ENCODE measurements at regions of chr12 and their contacts with region 1.

Region 1: DNA sequence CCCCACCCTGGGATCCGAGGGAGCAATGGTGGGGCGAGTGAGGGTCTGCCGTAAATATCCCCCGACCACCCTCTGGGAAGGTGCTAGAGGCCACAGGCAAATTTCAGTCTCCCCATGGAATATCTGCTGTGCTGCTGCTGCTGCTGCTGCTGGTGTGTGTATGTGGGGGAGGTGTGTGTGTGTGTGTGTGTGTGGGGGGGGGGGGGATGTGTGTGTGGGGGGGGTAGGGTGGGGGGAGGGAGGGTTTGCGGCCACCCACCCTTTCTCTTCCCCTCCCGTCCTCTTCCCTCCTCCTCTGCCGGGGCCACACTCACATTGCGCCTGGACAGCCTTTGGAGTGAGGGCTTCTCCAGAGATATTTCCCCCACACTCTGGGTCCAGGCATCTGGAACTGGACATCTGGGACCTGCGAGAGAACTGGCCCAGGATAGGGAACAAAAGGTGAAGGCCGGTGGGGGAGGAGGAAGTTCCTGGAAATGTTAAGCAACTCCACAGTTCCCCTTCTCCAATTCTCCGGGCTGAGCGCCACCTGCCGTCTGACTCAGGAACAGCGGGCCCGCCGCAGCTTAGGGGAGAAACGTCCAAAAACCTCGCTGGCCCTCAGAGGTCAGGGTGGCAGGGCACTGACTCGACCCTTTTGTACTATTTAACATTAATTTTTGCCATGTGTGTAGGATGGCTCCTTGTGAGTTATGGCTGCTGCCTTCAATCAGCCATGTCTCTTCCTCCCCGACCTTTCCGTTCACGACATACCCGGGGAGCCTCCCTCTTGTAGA is at the start of gene C1RL:
- DNase-seq: peak; percentile 50 to 88 (median 65)
- ATAC-seq: peak; percentile 69
- H3K4me3 ChIP-seq: peak within 1 kb of the TSS; percentile 95
- H3K4me3 Mint-ChIP-seq: peak within 1 kb of the TSS; percentile 90 to 98 (median 94)
- H3K27ac ChIP-seq: peak within 1 kb of the TSS; percentile 79
- H3K27ac Mint-ChIP-seq: peak within 1 kb of the TSS; percentile 84 to 95 (median 93)
- H3K4me1 ChIP-seq: peaks cover 6% of the 10 kb centered on the region in 2 donors
- H3K4me1 Mint-ChIP-seq: peaks cover 29 to 64% (median 43%) of the 10 kb centered on the region in 7 donors
- H3K27me3 ChIP-seq: no peaks in the 10 kb centered on the region
- H3K27me3 Mint-ChIP-seq: no peaks in the 10 kb centered on the region
- total RNA-seq, gene C1RL: 18.5 to 38.6 (median 24.4) TPM

Region 2: DNA sequence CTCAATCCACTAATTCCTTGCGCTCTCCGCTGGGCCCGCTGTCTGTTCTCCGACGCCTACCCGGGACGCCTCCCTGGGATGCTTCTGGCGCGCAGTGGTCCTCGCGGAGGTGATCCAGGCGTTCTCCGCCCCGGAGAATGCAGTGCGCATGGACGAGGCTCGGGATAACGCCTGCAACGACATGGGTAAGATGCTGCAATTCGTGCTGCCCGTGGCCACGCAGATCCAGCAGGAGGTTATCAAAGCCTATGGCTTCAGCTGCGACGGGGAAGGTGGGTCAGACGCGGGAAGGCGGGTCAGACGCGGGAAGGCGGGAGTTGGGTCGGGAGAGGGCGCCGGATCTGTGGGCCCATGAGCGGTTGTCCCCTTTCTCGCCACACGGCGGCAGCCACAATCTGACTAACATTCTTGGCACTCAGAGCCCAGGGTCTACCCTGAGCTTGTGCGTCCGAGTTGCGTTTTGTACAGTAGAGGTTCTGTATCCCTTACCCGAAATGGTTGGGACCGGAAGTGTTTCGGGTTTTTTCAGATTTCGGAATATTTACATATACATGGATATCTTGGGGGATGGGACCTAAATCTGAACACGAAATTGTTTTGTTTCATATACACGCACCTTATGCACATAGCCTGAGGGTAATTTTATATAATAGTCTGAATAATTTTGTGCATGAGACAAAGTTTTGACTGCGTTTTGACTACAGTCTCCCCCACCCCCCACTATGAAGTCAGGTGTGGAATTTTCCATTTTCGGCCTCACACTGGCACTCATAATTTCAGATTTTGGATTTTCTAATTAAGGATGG is 164.4 kb before region 1 on chr12:
- CTCF ChIA-PET with region 1: interaction called, 50 read pairs
- POLR2A ChIA-PET with region 1: interaction called, 38 read pairs
- intact Hi-C with region 1: loop called (anchors 1 kb)
- DNase-seq: peak; percentile 70 to 87 (median 84)
- ATAC-seq: peak; percentile 65
- H3K4me3 ChIP-seq: peak overlapping the region; percentile 94
- H3K4me3 Mint-ChIP-seq: peak overlapping the region; percentile 88 to 100 (median 96)
- H3K27ac ChIP-seq: peak overlapping the region; percentile 95
- H3K27ac Mint-ChIP-seq: peak overlapping the region; percentile 95 to 100 (median 98)
- H3K4me1 ChIP-seq: peaks cover 56% of the 10 kb centered on the region in 2 donors
- H3K4me1 Mint-ChIP-seq: peaks cover 42 to 75% (median 60%) of the 10 kb centered on the region in 7 donors
- H3K27me3 ChIP-seq: no peaks in the 10 kb centered on the region
- H3K27me3 Mint-ChIP-seq: no peaks in the 10 kb centered on the region

Region 3: DNA sequence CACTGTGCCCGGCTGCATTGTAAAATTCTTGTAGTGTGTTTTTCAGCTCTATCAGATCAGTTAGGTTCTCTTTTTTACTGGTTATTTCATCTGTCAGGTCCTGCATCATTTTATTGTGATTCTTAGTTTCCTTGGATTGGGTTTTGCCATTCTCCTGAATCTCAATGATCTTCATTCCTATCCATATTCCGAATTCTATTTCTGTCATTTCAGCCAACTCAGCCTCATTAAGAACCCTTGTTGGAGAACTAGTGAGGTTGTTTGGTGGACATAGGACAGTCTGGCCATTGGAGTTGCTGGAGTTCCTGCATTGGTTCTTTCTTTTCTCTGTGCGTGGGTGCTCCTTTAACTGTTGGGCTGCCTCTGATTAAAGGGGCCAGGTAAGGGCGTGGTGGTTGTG is 54.1 kb before region 1 on chr12:
- CTCF ChIA-PET with region 1: no interaction called
- POLR2A ChIA-PET with region 1: no interaction called
- intact Hi-C with region 1: loop called in 1 of 2 experiments (anchors 2 kb)
- DNase-seq: no peak
- ATAC-seq: no peak
- H3K4me3 ChIP-seq: no peak overlapping the region
- H3K4me3 Mint-ChIP-seq: peak overlapping the region in 1 of 10 donors; percentile 1
- H3K27ac ChIP-seq: no peak overlapping the region
- H3K27ac Mint-ChIP-seq: no peak overlapping the region
- H3K4me1 ChIP-seq: no peaks in the 10 kb centered on the region
- H3K4me1 Mint-ChIP-seq: no peaks in the 10 kb centered on the region
- H3K27me3 ChIP-seq: no peaks in the 10 kb centered on the region
- H3K27me3 Mint-ChIP-seq: peaks cover 12 to 61% (median 24%) of the 10 kb centered on the region in 5 donors

Region 4: GRCh38 chr12:7092229-7092985 is 16.6 kb before region 1 on chr12 and contains the start of gene C1R:
- CTCF ChIA-PET with region 1: interaction called, 13 read pairs
- POLR2A ChIA-PET with region 1: interaction called, 5 read pairs
- intact Hi-C with region 1: loop called (anchors 1 kb)
- DNase-seq: peak; percentile 46 to 71 (median 64)
- ATAC-seq: peak; percentile 81
- H3K4me3 ChIP-seq: peak within 1 kb of the TSS; percentile 66
- H3K4me3 Mint-ChIP-seq: peak within 1 kb of the TSS; percentile 76 to 91 (median 86)
- H3K27ac ChIP-seq: peak within 1 kb of the TSS; percentile 44
- H3K27ac Mint-ChIP-seq: peak within 1 kb of the TSS in 8 of 9 donors; percentile 65 to 94 (median 78)
- H3K4me1 ChIP-seq: peaks cover 7 to 8% of the 10 kb centered on the region in 2 donors
- H3K4me1 Mint-ChIP-seq: peaks cover 0 to 14% (median 9%) of the 10 kb centered on the region in 7 donors
- H3K27me3 ChIP-seq: no peaks in the 10 kb centered on the region
- H3K27me3 Mint-ChIP-seq: no peaks in the 10 kb centered on the region
- total RNA-seq, gene C1R: 1.6 to 7.2 (median 4.8) TPM

Region 5: GRCh38 chr12:7129872-7130680 is 21.1 kb after region 1 on chr12 and contains the start of gene CLSTN3:
- CTCF ChIA-PET with region 1: interaction called, 3 read pairs
- POLR2A ChIA-PET with region 1: interaction called, 3 read pairs
- intact Hi-C with region 1: loop called (anchors 1 to 2 kb)
- DNase-seq: peak; percentile 70 to 88 (median 83)
- ATAC-seq: peak; percentile 93
- H3K4me3 ChIP-seq: peak within 1 kb of the TSS; percentile 88
- H3K4me3 Mint-ChIP-seq: peak within 1 kb of the TSS; percentile 94 to 100 (median 96)
- H3K27ac ChIP-seq: peak within 1 kb of the TSS; percentile 73
- H3K27ac Mint-ChIP-seq: peak within 1 kb of the TSS; percentile 73 to 95 (median 92)
- H3K4me1 ChIP-seq: peaks cover 18% of the 10 kb centered on the region in 2 donors
- H3K4me1 Mint-ChIP-seq: peaks cover 29 to 41% (median 34%) of the 10 kb centered on the region in 7 donors
- H3K27me3 ChIP-seq: no peaks in the 10 kb centered on the region
- H3K27me3 Mint-ChIP-seq: no peaks in the 10 kb centered on the region
- total RNA-seq, gene CLSTN3: 20.2 to 76.3 (median 38.7) TPM

Measured in naive thymus-derived CD4-positive, alpha-beta T cell (primary cell).